HEK293 (cell line): ENCODE measurements at regions of chr18 and their contacts with region 1.

Region 1: GRCh38 chr18:80157708-80158343 is 48.8 kb downstream of the ADNP2 start:
- H3K4me3 ChIP-seq: no peak overlapping the region
- H3K27ac ChIP-seq: no peak overlapping the region
- H3K4me1 ChIP-seq: no peaks in the 10 kb centered on the region
- CTCF ChIP-seq: peak; percentile 51; the same call in 1 of the 2 replicates

Region 2: GRCh38 chr18:80147418-80148325 is 10.2 kb before region 1 on chr18:
- CTCF ChIA-PET with region 1: interaction called, 38 read pairs
- POLR2A ChIA-PET with region 1: no interaction called
- H3K4me3 ChIP-seq: peak overlapping the region; percentile 41
- H3K27ac ChIP-seq: peak overlapping the region; percentile 49; the same call in 1 of the 2 replicates
- H3K4me1 ChIP-seq: peaks cover 15% of the 10 kb centered on the region
- CTCF ChIP-seq: no peak

Region 3: GRCh38 chr18:80171054-80171872 is 13.4 kb after region 1 on chr18:
- CTCF ChIA-PET with region 1: interaction called, 15 read pairs
- POLR2A ChIA-PET with region 1: no interaction called
- H3K4me3 ChIP-seq: no peak overlapping the region
- H3K27ac ChIP-seq: no peak overlapping the region
- H3K4me1 ChIP-seq: no peaks in the 10 kb centered on the region
- CTCF ChIP-seq: peak; percentile 64

Region 4: GRCh38 chr18:80253871-80254492 is 96.2 kb after region 1 on chr18:
- CTCF ChIA-PET with region 1: interaction called, 37 read pairs
- POLR2A ChIA-PET with region 1: interaction called, 3 read pairs
- H3K4me3 ChIP-seq: no peak overlapping the region
- H3K27ac ChIP-seq: no peak overlapping the region
- H3K4me1 ChIP-seq: 0 out of 2 replicates have a peak, but pooled peaks cover 4% of the 10 kb centered on the region
- CTCF ChIP-seq: no peak